Transverse colon (tissue), 4 donors: ENCODE measurements at regions of chr6 and their contacts with region 1.

Region 1: DNA sequence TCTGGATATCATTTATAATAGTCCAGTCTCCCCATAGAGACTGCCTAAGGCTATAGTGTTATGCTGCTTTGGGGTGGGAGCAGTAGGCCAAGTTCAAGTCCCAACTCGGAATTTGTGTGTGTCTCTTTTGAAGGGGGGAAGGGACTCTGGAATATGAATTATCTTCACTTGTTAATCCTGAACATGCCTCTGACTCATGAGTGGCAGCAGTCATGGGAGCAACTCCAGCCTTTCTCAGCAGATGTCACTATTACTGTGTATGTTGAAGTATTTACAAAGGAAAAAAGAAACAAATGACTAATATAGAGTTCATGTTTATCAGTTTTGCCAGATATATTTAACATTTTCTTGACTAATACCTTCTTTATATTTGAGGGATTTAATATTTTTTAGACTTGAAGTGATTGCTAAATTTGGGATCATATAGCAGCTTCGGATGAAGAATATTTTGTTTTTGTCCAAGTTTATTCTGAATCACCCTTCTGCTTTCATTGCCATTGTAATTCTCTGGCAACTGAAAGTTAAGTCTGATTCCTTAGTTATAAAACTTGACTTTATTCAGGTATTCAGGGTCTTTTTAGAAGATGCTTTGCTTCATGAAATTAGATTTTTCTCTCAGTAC is 23.4 kb downstream of the FAM217A start:
- DNase-seq: peak; percentile 28
- H3K4me3 ChIP-seq: no peak overlapping the region
- H3K27ac ChIP-seq: no peak overlapping the region
- H3K4me1 ChIP-seq: peaks cover 0 to 4% (median 0%) of the 10 kb centered on the region in 4 donors
- H3K27me3 ChIP-seq: no peaks in the 10 kb centered on the region
- CTCF ChIP-seq: peak in 4 of 5 experiments; percentile 29 to 50 (median 40)
- EP300 ChIP-seq: no peak
- POLR2A ChIP-seq: no peak

Region 2: GRCh38 chr6:4155848-4156466 is 100.4 kb after region 1 on chr6:
- in situ Hi-C with region 1: loop called in 3 of 4 experiments (anchors 5 to 10 kb)
- intact Hi-C with region 1: no loop called
- DNase-seq: peak; percentile 78
- H3K4me3 ChIP-seq: no peak overlapping the region
- H3K27ac ChIP-seq: no peak overlapping the region
- H3K4me1 ChIP-seq: peaks cover 0 to 3% (median 1%) of the 10 kb centered on the region in 4 donors
- H3K27me3 ChIP-seq: no peaks in the 10 kb centered on the region
- CTCF ChIP-seq: peak; percentile 85 to 88 (median 86)
- EP300 ChIP-seq: no peak
- POLR2A ChIP-seq: no peak